Posterior vena cava (tissue), 2 donors: ENCODE measurements at regions of chr4 and their contacts with region 1.

Region 1: GRCh38 chr4:25890571-25891485 is 23.2 kb upstream of the SMIM20 start:
- DNase-seq: no peak

Region 2: DNA sequence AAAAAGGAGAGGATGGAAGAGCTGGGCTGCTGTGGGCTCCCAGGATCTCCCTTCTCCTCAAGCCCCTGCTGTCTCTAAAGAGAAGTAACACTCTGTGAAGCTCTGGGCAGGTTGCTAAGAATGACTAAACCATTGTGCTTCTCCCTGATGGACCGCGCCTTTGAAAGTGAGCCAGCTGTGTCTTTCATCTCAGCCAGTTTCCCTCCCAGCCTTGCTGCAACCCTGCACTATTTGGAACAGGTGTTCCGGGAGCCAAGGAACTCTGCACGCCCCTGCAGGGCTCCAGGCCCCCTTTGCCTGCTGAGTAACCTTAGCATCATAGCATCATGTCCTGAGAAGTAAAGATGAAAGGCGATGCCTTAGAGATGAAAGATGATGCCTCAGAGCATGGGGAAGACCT is 62.9 kb after region 1 on chr4:
- intact Hi-C with region 1: loop called in 1 of 2 experiments (anchors 2 kb)
- DNase-seq: no peak

Region 3: DNA sequence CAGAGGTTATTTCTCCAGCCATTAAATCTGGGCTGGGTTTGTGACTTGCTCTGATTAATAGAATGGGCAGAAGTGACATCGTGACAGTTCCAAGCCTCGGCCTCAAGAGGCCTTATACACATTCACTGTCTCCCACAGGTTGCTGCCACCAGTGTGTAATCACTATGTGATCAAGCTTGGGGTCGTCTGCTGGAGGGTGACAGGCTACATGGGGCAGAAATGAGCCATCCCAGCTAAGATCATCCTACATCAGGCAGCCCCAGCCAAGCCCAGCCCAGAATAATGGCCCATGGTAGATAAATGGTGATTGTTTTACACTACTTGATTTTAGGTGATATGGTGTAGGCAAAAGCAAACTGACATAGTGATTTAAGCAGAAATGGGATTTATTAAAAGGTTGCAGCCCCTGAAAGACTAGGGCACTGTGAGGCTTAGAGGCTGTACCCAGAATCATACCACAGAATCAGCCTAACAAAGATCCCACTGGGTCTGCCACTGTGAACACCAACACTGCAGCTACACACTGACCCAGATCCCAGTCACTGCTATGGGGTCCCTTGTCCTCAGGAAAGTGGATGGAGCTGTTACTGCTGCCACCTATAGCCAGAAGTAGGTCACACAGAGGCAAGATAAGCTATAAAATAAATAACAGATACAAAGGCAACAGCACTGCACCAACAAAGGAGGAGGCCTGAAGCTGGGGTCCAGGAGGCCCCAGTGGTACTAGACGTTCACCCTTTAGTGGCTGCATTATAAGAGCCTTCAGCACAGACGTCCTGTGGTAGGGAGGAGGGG is 270.4 kb after region 1 on chr4:
- intact Hi-C with region 1: no loop called
- DNase-seq: no peak